ENCODE measurements at regions of chr11 and their contacts with region 1.

Region 1: GRCh38 chr11:11157185-11157584 is 195.9 kb downstream of the CSNK2A3 start:
- DNase-seq: peak; percentile 46 to 66 (median 60)
- H3K4me3 ChIP-seq: no peak overlapping the region
- H3K4me3 Mint-ChIP-seq: peak overlapping the region in 4 of 8 donors; percentile 51 to 88 (median 86)
- H3K27ac ChIP-seq: no peak overlapping the region
- H3K27ac Mint-ChIP-seq: peak overlapping the region in 5 of 7 donors; percentile 87 to 94 (median 89)
- H3K4me1 ChIP-seq: peaks cover 35% of the 10 kb centered on the region
- H3K4me1 Mint-ChIP-seq: peaks cover 21 to 49% (median 30%) of the 10 kb centered on the region in 4 donors
- H3K27me3 ChIP-seq: no peaks in the 10 kb centered on the region
- H3K27me3 Mint-ChIP-seq: no peaks in the 10 kb centered on the region

Region 2: GRCh38 chr11:11036848-11037732 is 120.1 kb before region 1 on chr11:
- CTCF ChIA-PET with region 1: interaction called, 339 read pairs
- POLR2A ChIA-PET with region 1: interaction called, 20 read pairs
- intact Hi-C with region 1: loop called (anchors 1 kb)
- DNase-seq: peak; percentile 50 to 59 (median 57)
- H3K4me3 ChIP-seq: no peak overlapping the region
- H3K4me3 Mint-ChIP-seq: no peak overlapping the region
- H3K27ac ChIP-seq: no peak overlapping the region
- H3K27ac Mint-ChIP-seq: peak overlapping the region in 3 of 7 donors; percentile 29 to 77 (median 56)
- H3K4me1 ChIP-seq: no peaks in the 10 kb centered on the region
- H3K4me1 Mint-ChIP-seq: peaks cover 5 to 8% (median 6%) of the 10 kb centered on the region in 4 donors
- H3K27me3 ChIP-seq: peaks cover 4% of the 10 kb centered on the region
- H3K27me3 Mint-ChIP-seq: no peaks in the 10 kb centered on the region

Region 3: DNA sequence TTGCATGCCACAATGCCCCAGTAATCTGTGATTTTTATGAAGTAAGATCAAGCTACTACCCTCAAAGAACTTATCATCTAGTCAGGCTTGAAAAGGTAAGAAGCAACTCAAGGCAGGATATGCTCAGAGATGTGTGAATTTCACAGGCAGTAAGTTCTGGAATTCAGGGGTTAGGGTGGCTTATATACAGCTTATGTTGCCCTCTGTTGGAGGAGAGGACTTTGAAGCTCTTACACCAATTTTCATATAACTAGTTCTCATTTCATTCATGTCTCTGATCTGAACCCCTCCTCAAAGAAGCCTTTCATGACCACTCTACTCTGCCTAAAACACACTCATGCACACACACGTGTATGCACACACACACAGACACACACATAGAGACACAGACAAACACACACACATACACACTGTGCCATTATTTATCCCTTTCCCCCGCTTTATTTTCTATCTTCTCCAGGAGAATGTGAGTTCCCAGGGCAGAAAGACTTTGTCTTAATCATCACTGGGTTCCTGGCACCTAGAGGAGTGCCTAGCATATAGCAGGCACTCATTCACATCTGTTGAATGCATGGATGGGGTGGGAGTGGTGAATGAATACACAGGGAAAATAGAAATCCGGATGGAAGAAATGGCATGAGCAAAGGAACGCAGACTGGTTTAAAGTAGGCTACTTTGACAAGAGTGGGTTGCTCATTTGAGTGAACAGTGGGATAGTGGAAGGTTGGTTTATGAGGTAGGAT is 78.7 kb before region 1 on chr11:
- CTCF ChIA-PET with region 1: interaction called, 3 read pairs
- POLR2A ChIA-PET with region 1: no interaction called
- intact Hi-C with region 1: loop called (anchors 10 kb)
- DNase-seq: no peak
- H3K4me3 ChIP-seq: no peak overlapping the region
- H3K4me3 Mint-ChIP-seq: no peak overlapping the region
- H3K27ac ChIP-seq: no peak overlapping the region
- H3K27ac Mint-ChIP-seq: no peak overlapping the region
- H3K4me1 ChIP-seq: no peaks in the 10 kb centered on the region
- H3K4me1 Mint-ChIP-seq: peaks cover 3 to 7% (median 3%) of the 10 kb centered on the region in 4 donors
- H3K27me3 ChIP-seq: no peaks in the 10 kb centered on the region
- H3K27me3 Mint-ChIP-seq: peaks cover 6 to 9% of the 10 kb centered on the region in 2 donors

Region 4: DNA sequence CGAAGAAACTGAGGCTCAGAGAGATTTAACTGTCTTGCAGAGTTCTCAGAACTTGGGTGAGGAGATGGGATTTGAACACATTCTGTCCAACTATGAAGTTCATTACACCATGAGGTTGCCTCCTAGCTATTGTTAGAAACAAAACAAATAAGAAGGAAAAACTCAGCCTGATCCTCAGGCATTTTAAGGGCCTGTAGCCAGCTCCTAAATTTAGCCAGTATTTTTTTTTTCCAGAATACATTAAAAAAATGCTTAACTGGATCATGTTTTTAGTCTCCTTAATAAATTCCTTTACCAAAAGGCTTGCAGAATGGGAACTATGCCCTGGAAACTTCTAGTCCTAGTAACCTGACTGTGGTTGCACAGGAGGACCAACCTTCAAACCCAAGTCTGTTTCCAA is 16.1 kb before region 1 on chr11:
- CTCF ChIA-PET with region 1: interaction called, 72 read pairs
- POLR2A ChIA-PET with region 1: interaction called, 10 read pairs
- intact Hi-C with region 1: no loop called
- DNase-seq: no peak
- H3K4me3 ChIP-seq: no peak overlapping the region
- H3K4me3 Mint-ChIP-seq: no peak overlapping the region
- H3K27ac ChIP-seq: no peak overlapping the region
- H3K27ac Mint-ChIP-seq: no peak overlapping the region
- H3K4me1 ChIP-seq: peaks cover 14% of the 10 kb centered on the region
- H3K4me1 Mint-ChIP-seq: peaks cover 13 to 21% (median 18%) of the 10 kb centered on the region in 4 donors
- H3K27me3 ChIP-seq: no peaks in the 10 kb centered on the region
- H3K27me3 Mint-ChIP-seq: no peaks in the 10 kb centered on the region

Region 5: DNA sequence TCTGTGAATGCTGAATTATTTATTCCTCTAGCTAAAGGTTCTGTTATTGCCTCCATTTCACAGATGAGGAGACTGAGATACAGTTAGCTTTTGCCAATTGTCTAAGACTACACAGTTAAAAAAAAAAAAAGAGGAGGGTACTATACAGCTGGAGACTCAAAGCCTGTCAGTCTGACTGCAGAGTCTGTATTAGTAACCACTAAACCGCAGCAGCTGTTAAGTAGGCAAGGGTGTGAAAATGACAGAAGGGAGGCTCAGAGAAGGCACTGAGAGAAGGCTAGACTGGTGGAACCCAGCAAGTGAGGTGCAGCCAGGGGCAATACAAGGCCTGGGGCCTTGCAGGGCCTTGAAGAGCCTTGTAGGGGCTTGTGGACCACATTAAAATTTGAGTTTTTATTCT is 14.7 kb after region 1 on chr11:
- CTCF ChIA-PET with region 1: interaction called, 10 read pairs
- POLR2A ChIA-PET with region 1: interaction called, 5 read pairs
- intact Hi-C with region 1: no loop called
- DNase-seq: peak; percentile 69 to 82 (median 73)
- H3K4me3 ChIP-seq: no peak overlapping the region
- H3K4me3 Mint-ChIP-seq: peak overlapping the region in 2 of 8 donors; percentile 31 to 57
- H3K27ac ChIP-seq: no peak overlapping the region
- H3K27ac Mint-ChIP-seq: peak overlapping the region; percentile 10 to 94 (median 69)
- H3K4me1 ChIP-seq: peaks cover 22% of the 10 kb centered on the region
- H3K4me1 Mint-ChIP-seq: peaks cover 13 to 20% (median 15%) of the 10 kb centered on the region in 4 donors
- H3K27me3 ChIP-seq: no peaks in the 10 kb centered on the region
- H3K27me3 Mint-ChIP-seq: peaks cover 2% of the 10 kb centered on the region in 2 donors

Region 6: GRCh38 chr11:11265994-11266606 is 108.9 kb after region 1 on chr11:
- CTCF ChIA-PET with region 1: interaction called, 4 read pairs
- POLR2A ChIA-PET with region 1: no interaction called
- intact Hi-C with region 1: loop called (anchors 2 kb)
- DNase-seq: peak in 4 of 5 donors; percentile 30 to 51 (median 46)
- H3K4me3 ChIP-seq: no peak overlapping the region
- H3K4me3 Mint-ChIP-seq: no peak overlapping the region
- H3K27ac ChIP-seq: no peak overlapping the region
- H3K27ac Mint-ChIP-seq: no peak overlapping the region
- H3K4me1 ChIP-seq: no peaks in the 10 kb centered on the region
- H3K4me1 Mint-ChIP-seq: peaks cover 0 to 3% (median 0%) of the 10 kb centered on the region in 4 donors
- H3K27me3 ChIP-seq: no peaks in the 10 kb centered on the region
- H3K27me3 Mint-ChIP-seq: peaks cover 0 to 3% of the 10 kb centered on the region in 2 donors

Region 7: GRCh38 chr11:11675671-11676181 is 518.5 kb after region 1 on chr11:
- CTCF ChIA-PET with region 1: no interaction called
- POLR2A ChIA-PET with region 1: no interaction called
- intact Hi-C with region 1: no loop called
- DNase-seq: no peak
- H3K4me3 ChIP-seq: no peak overlapping the region
- H3K4me3 Mint-ChIP-seq: no peak overlapping the region
- H3K27ac ChIP-seq: no peak overlapping the region
- H3K27ac Mint-ChIP-seq: no peak overlapping the region
- H3K4me1 ChIP-seq: no peaks in the 10 kb centered on the region
- H3K4me1 Mint-ChIP-seq: no peaks in the 10 kb centered on the region
- H3K27me3 ChIP-seq: no peaks in the 10 kb centered on the region
- H3K27me3 Mint-ChIP-seq: peaks cover 4 to 11% of the 10 kb centered on the region in 2 donors

Region 8: DNA sequence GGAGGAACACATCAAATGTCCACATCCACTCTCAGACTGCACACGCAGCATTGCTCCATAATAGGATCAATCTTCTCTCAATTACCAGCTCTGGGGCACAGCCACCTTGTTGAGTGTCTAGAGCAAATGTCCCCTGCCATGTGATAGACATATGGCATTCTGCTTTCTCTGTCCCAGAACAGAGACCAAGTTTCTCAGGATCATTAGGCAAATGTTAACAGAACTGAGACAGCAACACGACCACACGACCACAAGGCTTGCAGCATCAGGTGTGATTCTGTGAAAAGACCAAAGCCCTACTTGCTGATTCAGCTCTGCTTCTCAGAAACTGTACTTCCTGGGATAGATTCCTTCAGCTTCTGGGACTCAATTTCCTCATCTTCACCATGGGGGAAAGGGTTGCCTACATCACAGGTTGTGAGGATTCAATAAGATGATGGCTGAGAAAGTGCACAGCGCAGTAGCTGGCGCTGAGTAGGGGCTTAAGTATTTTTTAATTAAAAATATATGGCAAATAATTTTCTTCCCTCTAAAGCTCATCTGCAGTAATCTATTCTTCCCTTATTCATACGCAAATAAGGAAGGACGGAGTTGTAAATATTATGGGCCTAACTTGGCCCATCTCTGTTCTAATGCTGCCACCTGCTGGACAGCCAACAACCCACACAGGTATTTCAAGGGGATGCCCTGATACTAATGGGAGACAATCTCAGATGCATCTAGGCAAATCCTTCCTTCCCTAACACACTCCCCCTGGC is 630.3 kb after region 1 on chr11:
- CTCF ChIA-PET with region 1: interaction called, 6 read pairs
- POLR2A ChIA-PET with region 1: no interaction called
- intact Hi-C with region 1: loop called (anchors 1 kb)
- DNase-seq: peak; percentile 59 to 67 (median 61)
- H3K4me3 ChIP-seq: no peak overlapping the region
- H3K4me3 Mint-ChIP-seq: no peak overlapping the region
- H3K27ac ChIP-seq: no peak overlapping the region
- H3K27ac Mint-ChIP-seq: no peak overlapping the region
- H3K4me1 ChIP-seq: no peaks in the 10 kb centered on the region
- H3K4me1 Mint-ChIP-seq: peaks cover 0 to 1% (median 0%) of the 10 kb centered on the region in 4 donors
- H3K27me3 ChIP-seq: no peaks in the 10 kb centered on the region
- H3K27me3 Mint-ChIP-seq: peaks cover 0 to 7% of the 10 kb centered on the region in 2 donors

Measured in CD4-positive, alpha-beta memory T cell (primary cell).